ENCODE measurements at regions of chr2 and their contacts with region 1.

Region 1: DNA sequence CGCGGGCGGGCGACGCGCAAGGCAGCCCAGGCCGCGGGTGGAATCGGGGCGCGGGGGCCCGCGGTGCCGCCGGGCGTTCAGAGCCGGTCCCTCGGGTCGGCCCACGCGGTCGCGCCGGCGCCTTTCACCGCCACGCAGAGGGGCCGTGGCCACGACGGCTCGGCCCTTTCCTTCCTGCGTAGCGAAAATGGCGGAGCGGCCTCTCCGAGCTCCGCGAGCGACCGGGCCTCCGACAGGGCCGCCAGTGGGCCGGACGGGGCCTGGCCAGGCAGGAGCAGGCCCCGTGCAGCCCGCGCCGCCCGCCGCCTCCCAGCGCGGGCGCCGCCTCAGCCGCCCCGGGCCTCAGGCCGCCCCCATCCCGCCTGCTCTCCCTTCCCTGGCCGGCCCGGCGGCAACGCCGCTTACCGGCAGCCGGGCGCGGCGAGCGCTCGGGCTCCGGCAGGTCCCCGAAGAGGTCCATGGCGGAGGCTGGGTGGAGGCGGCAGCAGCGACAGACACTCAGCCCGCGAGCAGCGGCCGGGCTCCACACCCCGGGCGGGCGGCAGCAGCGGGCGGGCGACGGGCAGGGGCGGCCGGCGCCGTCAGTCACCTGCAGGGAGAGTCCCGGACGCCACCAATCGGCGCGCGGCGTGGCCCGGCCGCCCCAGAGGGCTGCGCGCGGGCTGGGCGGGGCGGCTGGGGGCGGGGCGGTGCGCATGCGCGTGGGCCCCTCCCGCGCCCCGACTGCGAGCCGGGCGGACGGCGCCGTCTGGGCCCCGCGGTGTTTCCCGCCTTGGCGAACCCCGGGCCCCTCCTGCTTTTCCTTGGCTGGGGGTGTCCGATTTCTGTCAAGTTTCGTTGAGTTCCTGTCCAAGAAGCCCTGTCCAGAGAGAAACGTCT is at the start of gene ILKAP:
- DNase-seq: peak; percentile 80 to 87
- H3K4me3 ChIP-seq: peak within 1 kb of the TSS; percentile 64
- H3K4me3 Mint-ChIP-seq: peak within 1 kb of the TSS; percentile 74
- H3K27ac Mint-ChIP-seq: peak within 1 kb of the TSS; percentile 55
- H3K4me1 ChIP-seq: peaks cover 4% of the 10 kb centered on the region; the same call in 1 of the 2 replicates
- H3K4me1 Mint-ChIP-seq: no peaks in the 10 kb centered on the region
- H3K27me3 ChIP-seq: no peaks in the 10 kb centered on the region
- H3K27me3 Mint-ChIP-seq: no peaks in the 10 kb centered on the region
- CTCF ChIP-seq: no peak
- total RNA-seq, gene ILKAP: 31.6 and 32.2 TPM in 2 replicates

Region 2: GRCh38 chr2:238060542-238061314 is 142.6 kb before region 1 on chr2 and contains the start of gene SCLY:
- CTCF ChIA-PET with region 1: no interaction called
- POLR2A ChIA-PET with region 1: interaction called, 14 read pairs
- intact Hi-C with region 1: no loop called
- DNase-seq: peak; percentile 94
- H3K4me3 ChIP-seq: peak within 1 kb of the TSS; percentile 83
- H3K4me3 Mint-ChIP-seq: peak within 1 kb of the TSS; percentile 82
- H3K27ac Mint-ChIP-seq: peak within 1 kb of the TSS; percentile 87
- H3K4me1 ChIP-seq: peaks cover 13% of the 10 kb centered on the region
- H3K4me1 Mint-ChIP-seq: peaks cover 20% of the 10 kb centered on the region
- H3K27me3 ChIP-seq: no peaks in the 10 kb centered on the region
- H3K27me3 Mint-ChIP-seq: no peaks in the 10 kb centered on the region
- CTCF ChIP-seq: no peak
- total RNA-seq, gene SCLY: 21.2 and 21.7 TPM in 2 replicates

Region 3: GRCh38 chr2:238233625-238234024 is 30.3 kb after region 1 on chr2:
- CTCF ChIA-PET with region 1: no interaction called
- POLR2A ChIA-PET with region 1: no interaction called
- intact Hi-C with region 1: loop called (anchors 1 kb)
- DNase-seq: no peak
- H3K4me3 ChIP-seq: no peak overlapping the region
- H3K4me3 Mint-ChIP-seq: peak overlapping the region; percentile 70
- H3K27ac Mint-ChIP-seq: no peak overlapping the region
- H3K4me1 ChIP-seq: no peaks in the 10 kb centered on the region
- H3K4me1 Mint-ChIP-seq: no peaks in the 10 kb centered on the region
- H3K27me3 ChIP-seq: no peaks in the 10 kb centered on the region
- H3K27me3 Mint-ChIP-seq: no peaks in the 10 kb centered on the region
- CTCF ChIP-seq: no peak